ENCODE measurements at regions of chr2 and their contacts with region 1.

Region 1: GRCh38 chr2:55419679-55420438 is at the start of gene CCDC88A:
- DNase-seq: peak; percentile 95
- H3K4me3 Mint-ChIP-seq: peak within 1 kb of the TSS; percentile 98
- H3K27ac Mint-ChIP-seq: peak within 1 kb of the TSS; percentile 95
- H3K4me1 Mint-ChIP-seq: peaks cover 38% of the 10 kb centered on the region
- H3K27me3 Mint-ChIP-seq: no peaks in the 10 kb centered on the region
- CTCF ChIP-seq: no peak
- total RNA-seq, gene CCDC88A: 52.1 and 60.8 TPM in 2 replicates

Region 2: GRCh38 chr2:55232084-55232862 is 187.6 kb before region 1 on chr2 and contains the starts of genes CLHC1 and RPS27A:
- CTCF ChIA-PET with region 1: interaction called, 3 read pairs
- POLR2A ChIA-PET with region 1: interaction called, 17 read pairs
- intact Hi-C with region 1: loop called (anchors 5 kb)
- DNase-seq: peak; percentile 97
- H3K4me3 Mint-ChIP-seq: peak within 1 kb of the TSS; percentile 87
- H3K27ac Mint-ChIP-seq: peak within 1 kb of the TSS; percentile 96
- H3K4me1 Mint-ChIP-seq: peaks cover 36% of the 10 kb centered on the region
- H3K27me3 Mint-ChIP-seq: no peaks in the 10 kb centered on the region
- CTCF ChIP-seq: no peak
- total RNA-seq, gene CLHC1: 32.8 and 35.4 TPM in 2 replicates
- total RNA-seq, gene RPS27A: 1,343 and 1,536 TPM in 2 replicates

Region 3: GRCh38 chr2:55311444-55311870 is 108.4 kb before region 1 on chr2:
- CTCF ChIA-PET with region 1: no interaction called
- POLR2A ChIA-PET with region 1: interaction called, 3 read pairs
- intact Hi-C with region 1: loop called (anchors 5 kb)
- DNase-seq: peak; percentile 59
- H3K4me3 Mint-ChIP-seq: no peak overlapping the region
- H3K27ac Mint-ChIP-seq: no peak overlapping the region
- H3K4me1 Mint-ChIP-seq: peaks cover 15% of the 10 kb centered on the region
- H3K27me3 Mint-ChIP-seq: no peaks in the 10 kb centered on the region
- CTCF ChIP-seq: peak; percentile 45

Region 4: DNA sequence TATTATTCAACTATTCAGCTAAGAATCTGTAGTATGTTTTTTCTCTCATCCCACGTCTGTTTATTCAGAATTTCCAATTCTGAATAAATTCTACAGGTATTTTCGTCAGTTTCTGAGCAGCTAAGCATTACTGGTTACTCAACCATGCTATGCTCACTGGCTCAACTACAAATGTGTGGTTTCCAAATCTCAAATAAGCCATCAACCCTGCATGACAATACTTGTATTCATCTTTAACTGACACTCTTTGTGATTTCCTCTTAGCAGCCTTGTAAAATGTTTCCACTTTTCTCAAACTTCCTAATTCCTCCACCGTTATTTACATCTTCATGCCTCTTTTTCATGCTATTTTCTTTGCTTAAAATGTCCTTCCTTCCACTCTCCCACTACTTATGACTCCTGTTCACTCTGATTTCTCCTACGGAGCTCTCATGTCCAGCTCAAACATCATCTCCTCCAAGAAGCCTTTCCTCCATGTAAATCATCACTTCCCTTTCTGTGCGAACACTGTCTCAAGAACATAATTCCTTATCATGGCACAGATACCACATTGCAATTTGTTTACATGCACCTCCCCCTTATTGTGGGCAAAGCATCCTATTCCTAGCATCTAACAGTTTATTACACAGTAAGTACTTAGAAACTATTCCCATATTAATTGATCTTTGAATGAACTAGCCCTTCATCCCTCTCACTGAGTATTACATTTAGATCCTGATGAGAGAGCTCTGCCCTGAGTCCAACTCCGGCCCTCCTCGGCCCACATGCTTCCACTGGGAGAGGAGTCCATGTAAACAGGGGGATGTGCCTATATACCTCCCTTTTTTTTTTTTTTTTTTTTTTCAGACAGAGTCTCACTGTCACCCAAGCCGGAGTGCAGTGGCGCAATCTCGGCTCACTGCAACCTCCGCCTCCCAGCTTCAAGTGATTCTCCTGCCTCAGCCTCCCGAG is 10.7 kb before region 1 on chr2:
- CTCF ChIA-PET with region 1: interaction called, 3 read pairs
- POLR2A ChIA-PET with region 1: interaction called, 15 read pairs
- intact Hi-C with region 1: no loop called
- DNase-seq: no peak
- H3K4me3 Mint-ChIP-seq: peak overlapping the region; percentile 0
- H3K27ac Mint-ChIP-seq: peak overlapping the region; percentile 46
- H3K4me1 Mint-ChIP-seq: peaks cover 17% of the 10 kb centered on the region
- H3K27me3 Mint-ChIP-seq: no peaks in the 10 kb centered on the region
- CTCF ChIP-seq: no peak

Region 5: DNA sequence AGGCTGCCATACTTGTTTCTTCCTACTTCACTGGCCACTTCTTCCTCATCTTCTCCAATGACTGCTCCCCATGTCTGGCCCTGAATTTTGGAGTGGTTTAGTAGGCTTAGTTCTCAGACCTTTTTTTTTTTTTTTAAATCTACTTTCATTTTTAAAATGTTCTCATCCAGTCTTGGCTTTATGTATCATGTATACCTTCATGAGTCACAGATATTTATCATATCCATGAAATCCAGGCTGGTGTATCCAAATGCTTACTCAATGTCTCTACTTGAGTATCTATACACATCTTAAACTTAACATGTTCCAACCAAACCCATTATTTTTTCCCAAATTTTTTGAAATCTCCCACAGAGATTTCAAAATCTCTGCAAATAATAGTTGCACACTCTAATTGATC is 73.4 kb after region 1 on chr2:
- CTCF ChIA-PET with region 1: no interaction called
- POLR2A ChIA-PET with region 1: no interaction called
- intact Hi-C with region 1: no loop called
- DNase-seq: peak; percentile 19
- H3K4me3 Mint-ChIP-seq: no peak overlapping the region
- H3K27ac Mint-ChIP-seq: peak overlapping the region; percentile 44
- H3K4me1 Mint-ChIP-seq: peaks cover 13% of the 10 kb centered on the region
- H3K27me3 Mint-ChIP-seq: peaks cover 10% of the 10 kb centered on the region
- CTCF ChIP-seq: no peak

Region 6: DNA sequence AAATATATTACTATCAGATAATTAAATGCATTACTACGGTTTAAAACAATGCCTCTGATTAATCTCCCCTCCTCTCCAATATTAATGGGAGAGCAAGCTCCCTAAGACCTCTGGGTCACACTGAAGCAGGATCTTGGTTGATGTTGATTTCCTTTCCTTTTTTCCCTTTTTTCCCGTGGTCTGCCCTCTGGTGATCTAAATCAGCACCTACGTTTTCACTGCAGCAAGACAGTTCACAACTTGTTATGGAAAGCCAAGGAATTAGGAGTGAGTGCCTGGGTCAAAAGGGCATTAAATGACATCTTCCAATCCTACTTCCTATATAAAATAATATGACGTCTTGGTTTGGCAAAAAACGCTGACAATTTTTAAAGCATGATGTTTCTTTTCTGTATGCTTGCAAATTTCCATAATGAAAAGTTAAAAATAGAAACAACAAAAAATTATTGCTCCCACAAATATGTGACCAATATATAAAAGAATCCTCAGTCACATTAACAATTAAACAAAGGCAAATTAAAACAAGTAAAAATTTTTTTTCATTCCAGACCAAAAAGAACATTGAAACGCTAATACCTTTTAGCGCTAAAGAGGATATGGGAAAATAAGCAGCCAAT is 91.8 kb after region 1 on chr2:
- CTCF ChIA-PET with region 1: interaction called, 5 read pairs
- POLR2A ChIA-PET with region 1: no interaction called
- intact Hi-C with region 1: loop called (anchors 1 kb)
- DNase-seq: peak; percentile 61
- H3K4me3 Mint-ChIP-seq: no peak overlapping the region
- H3K27ac Mint-ChIP-seq: no peak overlapping the region
- H3K4me1 Mint-ChIP-seq: peaks cover 6% of the 10 kb centered on the region
- H3K27me3 Mint-ChIP-seq: no peaks in the 10 kb centered on the region
- CTCF ChIP-seq: peak; percentile 34

Region 7: GRCh38 chr2:55636831-55637230 is 217.0 kb after region 1 on chr2:
- CTCF ChIA-PET with region 1: no interaction called
- POLR2A ChIA-PET with region 1: no interaction called
- intact Hi-C with region 1: no loop called
- DNase-seq: no peak
- H3K4me3 Mint-ChIP-seq: no peak overlapping the region
- H3K27ac Mint-ChIP-seq: no peak overlapping the region
- H3K4me1 Mint-ChIP-seq: no peaks in the 10 kb centered on the region
- H3K27me3 Mint-ChIP-seq: no peaks in the 10 kb centered on the region
- CTCF ChIP-seq: no peak

Measured in MCF 10A (cell line).